MCF 10A (cell line): ENCODE measurements at regions of chrX and their contacts with region 1.

Region 1: DNA sequence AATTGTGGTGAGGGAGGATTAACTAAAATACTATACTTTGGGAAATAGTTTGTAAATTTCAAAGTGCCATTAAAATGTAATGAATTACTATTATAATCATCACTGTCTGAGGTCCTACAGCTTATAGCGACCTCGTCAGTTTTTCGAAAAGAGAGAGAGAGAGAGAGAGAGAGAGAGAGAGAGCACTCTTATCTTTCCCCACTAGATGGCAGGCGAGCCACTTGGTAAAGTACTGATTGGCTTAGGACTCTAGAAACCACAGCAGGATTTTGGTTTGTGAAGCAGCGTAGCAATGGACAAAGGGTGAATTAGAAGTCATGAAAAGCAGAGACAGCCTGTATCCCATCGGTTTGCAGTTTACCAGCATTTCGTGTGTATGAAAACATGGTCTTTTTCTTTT is 52.5 kb downstream of the LINC00632 start:
- DNase-seq: peak; percentile 78
- H3K4me3 Mint-ChIP-seq: no peak overlapping the region
- H3K27ac Mint-ChIP-seq: no peak overlapping the region
- H3K4me1 Mint-ChIP-seq: peaks cover 9% of the 10 kb centered on the region
- H3K27me3 Mint-ChIP-seq: no peaks in the 10 kb centered on the region
- CTCF ChIP-seq: peak; percentile 74

Region 2: GRCh38 chrX:140775211-140775610 is 13.2 kb after region 1 on chrX:
- CTCF ChIA-PET with region 1: interaction called, 14 read pairs
- POLR2A ChIA-PET with region 1: no interaction called
- intact Hi-C with region 1: no loop called
- DNase-seq: no peak
- H3K4me3 Mint-ChIP-seq: no peak overlapping the region
- H3K27ac Mint-ChIP-seq: no peak overlapping the region
- H3K4me1 Mint-ChIP-seq: no peaks in the 10 kb centered on the region
- H3K27me3 Mint-ChIP-seq: no peaks in the 10 kb centered on the region
- CTCF ChIP-seq: no peak

Region 3: DNA sequence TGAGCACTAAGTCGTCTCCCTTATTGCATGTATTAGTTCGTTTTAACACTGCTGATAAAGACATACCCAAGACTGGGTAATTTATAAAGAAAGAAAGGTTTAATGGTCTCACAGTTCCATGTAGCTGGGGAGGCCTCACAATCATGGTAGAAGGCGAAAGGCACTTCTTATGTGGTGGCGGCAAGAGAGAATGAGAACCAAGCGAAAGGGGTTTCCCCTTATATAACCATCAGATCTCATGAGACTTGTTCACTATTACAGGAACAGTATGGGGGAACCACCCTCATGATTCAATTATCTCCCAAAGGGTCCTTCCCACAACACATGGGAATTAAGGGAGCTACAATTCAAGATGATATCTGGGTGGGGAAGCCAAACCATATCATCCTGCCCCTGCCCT is 32.6 kb after region 1 on chrX:
- CTCF ChIA-PET with region 1: interaction called, 16 read pairs
- POLR2A ChIA-PET with region 1: no interaction called
- intact Hi-C with region 1: no loop called
- DNase-seq: no peak
- H3K4me3 Mint-ChIP-seq: no peak overlapping the region
- H3K27ac Mint-ChIP-seq: no peak overlapping the region
- H3K4me1 Mint-ChIP-seq: peaks cover 8% of the 10 kb centered on the region
- H3K27me3 Mint-ChIP-seq: no peaks in the 10 kb centered on the region
- CTCF ChIP-seq: no peak

Region 4: GRCh38 chrX:140817942-140818341 is 55.9 kb after region 1 on chrX:
- CTCF ChIA-PET with region 1: interaction called, 22 read pairs
- POLR2A ChIA-PET with region 1: no interaction called
- intact Hi-C with region 1: loop called (anchors 2 kb)
- DNase-seq: peak; percentile 51
- H3K4me3 Mint-ChIP-seq: no peak overlapping the region
- H3K27ac Mint-ChIP-seq: no peak overlapping the region
- H3K4me1 Mint-ChIP-seq: peaks cover 16% of the 10 kb centered on the region
- H3K27me3 Mint-ChIP-seq: no peaks in the 10 kb centered on the region
- CTCF ChIP-seq: peak; percentile 58

Region 5: GRCh38 chrX:140918407-140919038 is 156.5 kb after region 1 on chrX:
- CTCF ChIA-PET with region 1: interaction called, 10 read pairs
- POLR2A ChIA-PET with region 1: no interaction called
- intact Hi-C with region 1: loop called (anchors 1 kb)
- DNase-seq: peak; percentile 73
- H3K4me3 Mint-ChIP-seq: no peak overlapping the region
- H3K27ac Mint-ChIP-seq: peak overlapping the region; percentile 41
- H3K4me1 Mint-ChIP-seq: peaks cover 7% of the 10 kb centered on the region
- H3K27me3 Mint-ChIP-seq: no peaks in the 10 kb centered on the region
- CTCF ChIP-seq: peak; percentile 91

Region 6: GRCh38 chrX:141278302-141278701 is 516.2 kb after region 1 on chrX:
- CTCF ChIA-PET with region 1: interaction called, 25 read pairs
- POLR2A ChIA-PET with region 1: interaction called, 3 read pairs
- intact Hi-C with region 1: no loop called
- DNase-seq: peak; percentile 66
- H3K4me3 Mint-ChIP-seq: no peak overlapping the region
- H3K27ac Mint-ChIP-seq: no peak overlapping the region
- H3K4me1 Mint-ChIP-seq: no peaks in the 10 kb centered on the region
- H3K27me3 Mint-ChIP-seq: no peaks in the 10 kb centered on the region
- CTCF ChIP-seq: peak; percentile 74

Region 7: DNA sequence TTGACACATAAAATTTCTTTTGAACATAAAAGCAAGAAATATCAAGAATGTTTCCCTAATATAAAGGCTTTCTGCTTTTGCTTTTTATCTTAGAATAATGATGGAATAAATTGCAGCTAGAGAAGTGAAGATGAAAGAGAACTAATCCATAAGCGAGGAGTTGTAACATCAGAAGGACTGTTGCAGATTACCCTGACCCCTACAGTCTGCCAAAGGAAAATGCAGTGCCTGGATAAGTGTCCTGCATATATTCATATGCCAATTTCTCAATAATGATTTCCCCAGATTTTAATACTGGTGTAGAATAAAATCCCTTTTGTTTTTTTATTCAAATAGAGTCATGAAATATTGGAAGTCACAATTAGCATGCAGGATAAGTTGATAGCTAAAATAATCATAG is 1327.1 kb after region 1 on chrX:
- CTCF ChIA-PET with region 1: interaction called, 9 read pairs
- POLR2A ChIA-PET with region 1: no interaction called
- intact Hi-C with region 1: loop called (anchors 1 kb)
- DNase-seq: peak; percentile 54
- H3K4me3 Mint-ChIP-seq: no peak overlapping the region
- H3K27ac Mint-ChIP-seq: no peak overlapping the region
- H3K4me1 Mint-ChIP-seq: no peaks in the 10 kb centered on the region
- H3K27me3 Mint-ChIP-seq: no peaks in the 10 kb centered on the region
- CTCF ChIP-seq: peak; percentile 72